Naive thymus-derived CD4-positive, alpha-beta T cell (primary cell): ENCODE measurements at regions of chr7 and their contacts with region 1.

Region 1: DNA sequence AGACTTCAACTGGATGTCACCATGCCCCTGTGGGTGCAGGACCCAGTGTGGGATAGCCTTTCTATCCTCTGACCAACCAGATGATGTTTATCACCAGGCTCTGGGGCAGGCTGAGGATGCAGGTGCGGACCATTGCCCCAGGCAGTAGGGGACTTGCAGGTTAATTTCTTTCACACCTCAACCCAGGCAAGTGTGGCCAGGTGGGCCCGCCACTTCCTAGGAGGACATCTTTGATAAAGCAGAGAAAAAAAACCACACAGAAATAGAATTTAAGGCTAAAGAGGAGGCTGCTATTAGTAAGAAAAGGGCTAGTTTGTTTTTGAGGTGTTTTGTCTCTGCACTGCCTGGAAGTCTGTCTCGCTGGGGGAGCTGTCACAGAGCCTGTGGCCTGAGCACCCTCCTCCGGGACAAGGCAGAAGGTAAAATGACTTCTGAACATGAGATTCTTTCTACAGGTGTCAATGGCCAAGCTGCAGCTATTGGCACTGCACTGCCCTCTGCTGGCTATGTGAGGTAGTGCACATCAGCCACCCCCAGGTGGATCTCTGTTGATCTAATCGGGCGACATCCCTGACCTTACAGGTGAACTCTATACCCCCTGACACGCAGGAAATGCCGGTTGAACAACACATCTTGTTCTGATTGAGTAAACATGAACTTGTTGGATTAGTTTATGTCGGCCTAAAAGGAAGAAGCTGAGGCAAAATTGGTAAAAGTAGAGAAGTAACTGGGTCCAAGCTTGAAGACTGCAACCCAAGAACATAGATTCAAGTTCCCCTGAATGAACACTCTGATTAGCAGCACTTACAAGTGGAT is 21.0 kb downstream of the UPP1 start:
- DNase-seq: peak; percentile 74 to 91 (median 85)
- ATAC-seq: peak; percentile 97
- H3K4me3 ChIP-seq: no peak overlapping the region
- H3K4me3 Mint-ChIP-seq: peak overlapping the region in 4 of 10 donors; percentile 0 to 35 (median 20)
- H3K27ac ChIP-seq: peak overlapping the region; percentile 10
- H3K27ac Mint-ChIP-seq: peak overlapping the region; percentile 59 to 88 (median 81)
- H3K4me1 ChIP-seq: peaks cover 8 to 14% of the 10 kb centered on the region in 2 donors
- H3K4me1 Mint-ChIP-seq: peaks cover 10 to 32% (median 11%) of the 10 kb centered on the region in 7 donors
- H3K27me3 ChIP-seq: no peaks in the 10 kb centered on the region
- H3K27me3 Mint-ChIP-seq: no peaks in the 10 kb centered on the region

Region 2: DNA sequence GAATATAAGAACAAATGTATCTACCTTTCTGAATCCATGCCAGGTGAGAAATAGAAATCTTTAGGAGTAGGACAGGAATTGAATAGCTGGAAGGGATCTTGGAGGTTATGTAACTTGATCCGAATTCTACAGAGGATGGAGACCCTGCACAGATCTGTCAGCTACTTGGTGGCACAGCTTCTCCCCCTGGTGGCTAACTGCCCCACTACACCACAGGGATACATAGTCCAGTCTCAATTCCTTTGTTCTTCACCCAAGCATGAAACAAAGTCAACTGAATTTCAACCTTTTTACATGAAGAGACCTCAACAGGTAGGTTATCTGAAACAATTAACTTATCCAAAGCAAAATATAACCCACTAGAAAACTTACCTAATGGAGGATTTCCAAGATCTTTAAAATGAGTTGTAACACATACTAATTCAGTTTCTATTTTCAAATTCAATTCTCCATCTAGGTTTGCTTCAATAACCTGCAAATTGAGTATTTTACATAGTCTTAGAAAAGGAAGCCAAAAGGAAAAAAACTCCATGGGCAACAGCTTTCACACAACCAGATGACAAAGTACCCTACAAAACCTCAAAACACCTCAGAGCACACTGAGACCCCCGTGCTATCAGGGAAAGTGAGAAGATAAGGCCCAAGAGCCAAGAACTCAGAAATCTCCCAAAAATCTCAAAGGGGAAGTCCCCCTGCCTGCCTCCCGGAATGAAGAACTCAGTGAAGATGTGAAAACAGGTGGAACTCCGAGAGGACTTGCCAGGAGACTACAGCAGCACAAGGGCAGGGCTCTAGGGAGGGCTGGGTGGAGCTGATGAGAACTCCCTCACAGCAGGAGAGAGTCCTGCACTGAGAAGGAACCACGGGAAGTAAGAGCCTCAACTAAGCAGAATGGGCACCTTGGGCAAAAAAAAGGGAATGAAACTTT is 140.9 kb before region 1 on chr7:
- CTCF ChIA-PET with region 1: interaction called, 3 read pairs
- POLR2A ChIA-PET with region 1: interaction called, 3 read pairs
- intact Hi-C with region 1: loop called (anchors 1 kb)
- DNase-seq: peak in 7 of 9 donors; percentile 34 to 49 (median 38)
- ATAC-seq: peak; percentile 67
- H3K4me3 ChIP-seq: no peak overlapping the region
- H3K4me3 Mint-ChIP-seq: no peak overlapping the region
- H3K27ac ChIP-seq: no peak overlapping the region
- H3K27ac Mint-ChIP-seq: peak overlapping the region in 6 of 9 donors; percentile 25 to 64 (median 50)
- H3K4me1 ChIP-seq: no peaks in the 10 kb centered on the region
- H3K4me1 Mint-ChIP-seq: peaks cover 24 to 65% (median 37%) of the 10 kb centered on the region in 7 donors
- H3K27me3 ChIP-seq: no peaks in the 10 kb centered on the region
- H3K27me3 Mint-ChIP-seq: no peaks in the 10 kb centered on the region

Region 3: GRCh38 chr7:47991741-47992311 is 118.2 kb before region 1 on chr7:
- CTCF ChIA-PET with region 1: interaction called, 91 read pairs
- POLR2A ChIA-PET with region 1: interaction called, 37 read pairs
- intact Hi-C with region 1: loop called (anchors 1 kb)
- DNase-seq: peak; percentile 63 to 86 (median 83)
- ATAC-seq: peak; percentile 99
- H3K4me3 ChIP-seq: peak overlapping the region; percentile 84
- H3K4me3 Mint-ChIP-seq: peak overlapping the region; percentile 85 to 98 (median 94)
- H3K27ac ChIP-seq: peak overlapping the region; percentile 59
- H3K27ac Mint-ChIP-seq: peak overlapping the region; percentile 86 to 99 (median 94)
- H3K4me1 ChIP-seq: peaks cover 12% of the 10 kb centered on the region in 2 donors
- H3K4me1 Mint-ChIP-seq: peaks cover 13 to 24% (median 20%) of the 10 kb centered on the region in 7 donors
- H3K27me3 ChIP-seq: no peaks in the 10 kb centered on the region
- H3K27me3 Mint-ChIP-seq: no peaks in the 10 kb centered on the region

Region 4: DNA sequence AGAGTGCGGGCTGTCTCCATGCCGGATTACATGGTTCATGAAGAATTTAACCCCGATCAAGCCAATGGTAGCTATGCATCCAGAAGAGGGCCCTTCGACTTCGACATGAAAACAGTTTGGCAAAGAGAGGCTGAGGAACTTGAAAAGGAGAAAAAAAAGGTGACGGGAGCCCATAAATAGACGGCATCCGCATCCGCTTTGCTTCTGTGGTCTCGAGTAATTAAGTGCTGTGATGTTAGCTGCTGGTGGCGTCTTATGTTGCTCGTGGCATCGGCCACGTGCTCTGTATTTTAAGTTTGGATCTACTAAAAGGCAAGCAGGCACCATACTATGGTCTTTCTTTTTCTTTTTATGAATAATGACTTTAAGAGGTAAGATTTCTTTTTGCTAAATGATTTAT is 63.6 kb before region 1 on chr7:
- CTCF ChIA-PET with region 1: interaction called, 3 read pairs
- POLR2A ChIA-PET with region 1: no interaction called
- intact Hi-C with region 1: loop called in 1 of 2 experiments (anchors 1 kb)
- DNase-seq: peak in 7 of 9 donors; percentile 27 to 71 (median 51)
- ATAC-seq: peak; percentile 81
- H3K4me3 ChIP-seq: no peak overlapping the region
- H3K4me3 Mint-ChIP-seq: peak overlapping the region in 9 of 10 donors; percentile 8 to 72 (median 36)
- H3K27ac ChIP-seq: no peak overlapping the region
- H3K27ac Mint-ChIP-seq: peak overlapping the region in 4 of 9 donors; percentile 28 to 81 (median 72)
- H3K4me1 ChIP-seq: peaks cover 0 to 10% of the 10 kb centered on the region in 2 donors
- H3K4me1 Mint-ChIP-seq: peaks cover 8 to 34% (median 25%) of the 10 kb centered on the region in 7 donors
- H3K27me3 ChIP-seq: no peaks in the 10 kb centered on the region
- H3K27me3 Mint-ChIP-seq: no peaks in the 10 kb centered on the region

Region 5: DNA sequence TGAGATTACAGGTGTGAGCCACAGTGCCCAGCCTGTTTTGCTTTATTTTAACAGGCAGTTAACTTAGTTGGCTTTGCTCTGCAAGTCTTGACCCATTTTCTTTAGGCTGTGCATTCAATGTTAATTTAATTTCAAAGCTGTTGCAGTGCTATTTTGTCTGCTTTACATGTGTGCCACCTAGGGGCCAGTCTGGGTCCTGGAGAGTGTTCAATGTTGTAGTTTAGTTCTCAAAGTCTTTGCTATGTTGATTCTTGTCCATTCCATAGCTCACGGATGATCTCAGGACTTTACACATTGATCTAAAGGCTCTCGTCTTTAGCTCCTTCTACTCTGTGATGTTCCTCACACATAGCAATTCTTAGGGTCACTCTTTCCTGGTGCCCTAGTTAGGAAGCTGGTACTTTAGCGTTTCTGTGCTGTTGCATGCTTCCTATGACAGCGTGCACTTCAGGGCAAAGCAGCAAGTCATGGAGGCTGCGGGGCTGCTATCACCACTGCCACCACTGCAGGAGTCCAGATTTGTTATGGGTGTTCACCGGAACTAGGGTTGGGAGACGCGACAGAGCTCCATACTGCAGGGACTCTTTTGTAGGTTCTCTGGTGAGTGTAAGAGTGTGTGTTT is 44.8 kb after region 1 on chr7:
- CTCF ChIA-PET with region 1: no interaction called
- POLR2A ChIA-PET with region 1: no interaction called
- intact Hi-C with region 1: loop called in 1 of 2 experiments (anchors 2 kb)
- DNase-seq: peak in 7 of 9 donors; percentile 4 to 29 (median 13)
- ATAC-seq: peak; percentile 60
- H3K4me3 ChIP-seq: no peak overlapping the region
- H3K4me3 Mint-ChIP-seq: no peak overlapping the region
- H3K27ac ChIP-seq: no peak overlapping the region
- H3K27ac Mint-ChIP-seq: no peak overlapping the region
- H3K4me1 ChIP-seq: no peaks in the 10 kb centered on the region
- H3K4me1 Mint-ChIP-seq: no peaks in the 10 kb centered on the region
- H3K27me3 ChIP-seq: no peaks in the 10 kb centered on the region
- H3K27me3 Mint-ChIP-seq: peaks cover 10 to 32% (median 30%) of the 10 kb centered on the region in 5 donors